ENCODE measurements at regions of chr12 and their contacts with region 1.

Region 1: DNA sequence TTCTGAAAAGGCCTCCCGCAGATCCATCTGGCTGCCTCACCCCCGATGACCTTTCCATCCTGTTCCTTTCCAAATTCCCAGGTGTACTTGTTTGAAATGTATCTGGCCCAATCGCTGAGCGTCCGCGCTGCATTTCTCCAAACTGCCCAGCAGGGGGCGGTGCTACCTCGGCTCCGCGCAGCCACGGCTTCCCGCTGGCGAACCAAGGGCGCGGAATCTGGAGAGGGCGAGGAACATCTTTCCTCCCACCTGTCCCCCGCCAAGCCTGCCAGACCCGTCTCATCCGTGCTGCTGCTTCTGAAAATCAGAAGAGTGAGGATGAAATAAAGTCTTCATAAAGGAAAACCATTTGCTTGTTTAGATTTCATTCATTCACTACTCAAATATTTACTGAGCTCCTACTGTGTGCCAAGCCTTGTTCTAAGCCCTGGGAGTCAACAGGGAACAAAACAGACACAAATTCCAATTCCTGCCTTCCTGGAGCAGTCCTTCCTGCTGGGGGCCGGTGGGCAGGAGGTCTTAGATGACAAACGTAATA is 16.8 kb upstream of the MYL2 start:
- DNase-seq: peak in 2 of 3 donors; percentile 55
- ATAC-seq: peak; percentile 77
- H3K4me3 ChIP-seq: no peak overlapping the region
- H3K4me1 ChIP-seq: no peaks in the 10 kb centered on the region
- CTCF ChIP-seq: peak; percentile 80

Region 2: GRCh38 chr12:110661337-110661972 is 275.7 kb before region 1 on chr12:
- intact Hi-C with region 1: no loop called
- DNase-seq: peak; percentile 30 to 74 (median 41)
- ATAC-seq: peak; percentile 71
- H3K4me3 ChIP-seq: no peak overlapping the region
- H3K4me1 ChIP-seq: no peaks in the 10 kb centered on the region
- CTCF ChIP-seq: no peak

Region 3: GRCh38 chr12:110906083-110906482 is 31.1 kb before region 1 on chr12:
- intact Hi-C with region 1: no loop called
- DNase-seq: no peak
- ATAC-seq: no peak
- H3K4me3 ChIP-seq: no peak overlapping the region
- H3K4me1 ChIP-seq: no peaks in the 10 kb centered on the region
- CTCF ChIP-seq: no peak

Region 4: DNA sequence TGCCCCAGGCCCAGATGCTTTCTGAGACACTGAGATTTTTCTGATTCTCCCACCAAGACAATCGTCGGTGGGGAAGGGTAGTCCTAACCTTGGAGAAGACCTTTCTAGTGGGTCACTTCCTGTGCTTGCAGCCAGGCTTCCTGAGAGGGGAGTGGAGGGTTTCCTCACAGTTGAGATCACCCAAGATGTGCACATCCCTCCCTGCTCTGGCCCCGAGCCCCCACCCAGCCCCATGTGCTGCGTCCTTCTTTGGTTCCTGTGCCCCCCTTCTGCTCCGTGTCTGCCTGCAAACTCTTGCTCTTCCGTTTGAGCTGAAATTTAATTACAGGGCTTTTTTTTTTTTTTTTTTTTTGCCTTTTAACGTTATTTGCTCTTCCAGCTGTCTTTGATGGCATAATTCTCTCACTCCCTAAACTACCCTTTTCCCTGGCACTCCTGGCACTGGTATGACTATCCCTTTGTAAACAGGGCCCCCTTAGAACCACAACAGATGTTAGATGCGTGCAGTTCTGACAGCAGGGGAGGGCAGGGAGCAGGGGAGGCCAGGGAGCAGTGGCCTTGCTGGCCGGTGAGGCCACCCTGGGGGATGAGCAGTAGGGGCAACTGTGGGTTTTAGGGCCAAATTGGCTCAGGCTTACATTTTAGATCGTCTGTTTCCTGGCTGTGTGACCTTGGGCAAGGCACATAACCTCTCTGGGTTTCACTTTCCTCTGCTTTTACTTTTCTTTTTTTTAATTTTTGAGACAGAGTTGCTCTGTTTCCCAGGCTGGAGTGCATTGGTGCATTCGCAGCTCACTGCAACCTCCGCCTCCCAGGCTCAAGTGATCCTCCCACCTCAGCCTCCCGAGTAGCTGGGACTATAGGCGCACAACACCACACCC is 287.3 kb after region 1 on chr12:
- intact Hi-C with region 1: no loop called
- DNase-seq: no peak
- ATAC-seq: no peak
- H3K4me3 ChIP-seq: no peak overlapping the region
- H3K4me1 ChIP-seq: no peaks in the 10 kb centered on the region
- CTCF ChIP-seq: no peak

Region 5: DNA sequence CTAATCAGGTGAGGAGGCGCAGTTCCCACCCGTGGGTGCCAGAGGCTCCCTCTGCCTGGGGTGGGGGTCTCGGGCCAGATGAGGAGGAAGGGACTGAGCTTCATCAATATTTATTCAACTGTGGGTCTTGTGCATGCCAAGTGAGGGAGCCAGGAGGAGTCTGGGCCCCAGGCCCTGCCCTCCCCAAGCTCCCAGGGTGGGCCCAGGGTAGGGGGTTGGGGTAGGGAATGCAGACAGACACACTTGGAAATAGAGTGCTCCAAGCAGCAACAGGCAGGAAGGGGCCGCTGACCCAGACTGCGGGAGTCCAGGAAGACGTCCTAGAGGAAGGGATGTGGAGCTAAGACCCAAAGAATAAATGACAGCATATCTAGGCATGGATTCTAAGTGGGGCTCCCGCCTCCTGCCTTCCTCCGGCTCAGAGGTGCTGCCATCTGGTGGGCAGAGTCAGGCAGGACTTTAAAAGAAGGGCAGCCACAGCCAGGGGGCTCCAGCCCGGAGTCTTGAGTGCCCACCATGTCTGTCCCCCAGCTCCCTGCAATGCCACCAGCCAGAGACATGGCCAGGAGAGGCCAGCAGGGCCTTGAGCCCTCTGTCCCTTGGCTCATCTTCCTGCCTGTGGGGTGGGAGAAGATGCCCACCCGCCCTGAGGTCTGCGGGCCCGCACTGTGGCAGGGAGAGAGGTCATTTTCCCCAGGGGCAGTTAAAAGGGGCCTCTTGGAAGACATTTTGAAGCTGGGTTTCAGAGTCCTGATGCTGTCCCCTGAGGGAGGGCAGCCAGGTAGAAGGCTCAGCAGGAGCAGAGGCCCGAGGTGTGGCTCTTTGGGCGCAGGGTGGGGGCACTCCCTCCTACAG is 361.6 kb after region 1 on chr12:
- intact Hi-C with region 1: no loop called
- DNase-seq: peak in 2 of 3 donors; percentile 42 to 49
- ATAC-seq: peak; percentile 60
- H3K4me3 ChIP-seq: no peak overlapping the region
- H3K4me1 ChIP-seq: no peaks in the 10 kb centered on the region
- CTCF ChIP-seq: peak; percentile 12

Region 6: DNA sequence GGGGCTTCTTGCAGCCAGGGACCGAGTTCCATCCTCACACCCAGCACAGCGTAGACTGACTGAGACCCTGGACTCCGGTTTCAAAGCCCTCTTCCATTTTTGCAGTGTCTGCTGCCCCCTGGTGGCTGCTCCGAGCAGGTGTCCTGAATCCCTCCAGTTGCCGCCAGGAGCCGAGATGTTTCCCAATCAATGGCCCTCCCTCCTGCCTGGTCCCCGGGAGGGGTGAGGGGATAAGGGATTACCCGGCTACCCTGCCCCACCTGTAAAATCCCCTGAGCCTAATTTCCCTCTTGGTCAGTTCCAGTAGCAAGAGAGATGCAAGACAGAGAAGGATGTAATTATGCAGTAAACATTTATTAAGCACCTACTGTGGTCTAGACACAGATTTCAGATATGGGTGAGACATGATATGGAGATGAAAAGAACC is 376.7 kb after region 1 on chr12:
- intact Hi-C with region 1: loop called (anchors 2 to 5 kb)
- DNase-seq: peak; percentile 60 to 70 (median 66)
- ATAC-seq: peak; percentile 74
- H3K4me3 ChIP-seq: no peak overlapping the region
- H3K4me1 ChIP-seq: no peaks in the 10 kb centered on the region
- CTCF ChIP-seq: peak; percentile 81